ENCODE measurements at regions of chr7 and their contacts with region 1.

Region 1: GRCh38 chr7:102272075-102272917 is 14.4 kb upstream of the SH2B2 start:
- DNase-seq: peak; percentile 85
- H3K4me3 ChIP-seq: no peak overlapping the region
- H3K27ac ChIP-seq: no peak overlapping the region
- H3K4me1 ChIP-seq: peaks cover 0 to 8% (median 7%) of the 10 kb centered on the region in 4 donors
- H3K27me3 ChIP-seq: no peaks in the 10 kb centered on the region
- CTCF ChIP-seq: peak; percentile 80 to 94 (median 88)
- EP300 ChIP-seq: no peak
- POLR2A ChIP-seq: no peak

Region 2: DNA sequence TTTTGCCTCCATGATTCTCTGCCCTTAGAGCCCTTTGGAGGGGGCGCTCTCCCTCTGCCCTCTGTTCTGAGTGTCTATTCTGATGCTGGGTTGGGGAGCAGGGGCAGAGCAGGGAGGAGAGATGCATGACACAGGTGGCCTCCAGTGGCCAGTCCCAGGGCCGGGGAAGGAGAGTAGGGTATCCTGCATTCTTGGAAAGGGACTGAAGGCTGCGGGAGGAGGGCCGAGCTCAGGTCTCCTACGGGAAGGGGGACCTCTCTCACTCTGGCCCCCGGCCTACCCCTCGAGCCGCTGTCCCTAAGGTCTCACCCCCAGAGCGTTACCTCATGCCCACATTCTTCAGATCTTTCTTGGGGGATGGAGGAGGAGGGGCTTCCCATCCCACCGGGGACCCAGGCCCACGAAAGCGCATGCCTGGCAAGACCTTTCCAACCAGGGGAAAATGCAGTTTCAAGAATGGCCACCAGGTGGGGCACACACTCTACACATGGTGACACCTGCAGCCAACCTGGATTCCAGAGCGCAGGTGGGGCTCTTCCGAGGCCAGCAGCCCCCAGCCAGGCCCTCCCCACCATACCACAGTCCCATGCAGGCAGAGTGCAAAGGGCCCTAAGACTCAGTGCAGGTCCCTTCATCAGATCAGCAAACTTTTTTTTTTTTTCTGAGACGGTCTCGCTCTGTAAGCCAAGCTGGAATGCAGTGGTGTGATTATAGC is 729.6 kb before region 1 on chr7:
- intact Hi-C with region 1: loop called (anchors 1 kb)
- DNase-seq: no peak
- H3K4me3 ChIP-seq: no peak overlapping the region
- H3K27ac ChIP-seq: no peak overlapping the region
- H3K4me1 ChIP-seq: no peaks in the 10 kb centered on the region
- H3K27me3 ChIP-seq: peaks cover 0 to 8% (median 0%) of the 10 kb centered on the region in 3 donors
- CTCF ChIP-seq: peak; percentile 50 to 92 (median 84)
- EP300 ChIP-seq: no peak
- POLR2A ChIP-seq: no peak

Region 3: GRCh38 chr7:101602484-101603241 is 669.6 kb before region 1 on chr7:
- intact Hi-C with region 1: loop called (anchors 1 kb)
- DNase-seq: peak; percentile 79
- H3K4me3 ChIP-seq: no peak overlapping the region
- H3K27ac ChIP-seq: no peak overlapping the region
- H3K4me1 ChIP-seq: peaks cover 0 to 6% (median 3%) of the 10 kb centered on the region in 4 donors
- H3K27me3 ChIP-seq: no peaks in the 10 kb centered on the region
- CTCF ChIP-seq: peak; percentile 40 to 78 (median 66)
- EP300 ChIP-seq: no peak
- POLR2A ChIP-seq: no peak

Region 4: GRCh38 chr7:102248456-102249395 is 23.6 kb before region 1 on chr7:
- intact Hi-C with region 1: no loop called
- DNase-seq: no peak
- H3K4me3 ChIP-seq: no peak overlapping the region
- H3K27ac ChIP-seq: no peak overlapping the region
- H3K4me1 ChIP-seq: no peaks in the 10 kb centered on the region
- H3K27me3 ChIP-seq: no peaks in the 10 kb centered on the region
- CTCF ChIP-seq: no peak
- EP300 ChIP-seq: no peak
- POLR2A ChIP-seq: no peak

Region 5: DNA sequence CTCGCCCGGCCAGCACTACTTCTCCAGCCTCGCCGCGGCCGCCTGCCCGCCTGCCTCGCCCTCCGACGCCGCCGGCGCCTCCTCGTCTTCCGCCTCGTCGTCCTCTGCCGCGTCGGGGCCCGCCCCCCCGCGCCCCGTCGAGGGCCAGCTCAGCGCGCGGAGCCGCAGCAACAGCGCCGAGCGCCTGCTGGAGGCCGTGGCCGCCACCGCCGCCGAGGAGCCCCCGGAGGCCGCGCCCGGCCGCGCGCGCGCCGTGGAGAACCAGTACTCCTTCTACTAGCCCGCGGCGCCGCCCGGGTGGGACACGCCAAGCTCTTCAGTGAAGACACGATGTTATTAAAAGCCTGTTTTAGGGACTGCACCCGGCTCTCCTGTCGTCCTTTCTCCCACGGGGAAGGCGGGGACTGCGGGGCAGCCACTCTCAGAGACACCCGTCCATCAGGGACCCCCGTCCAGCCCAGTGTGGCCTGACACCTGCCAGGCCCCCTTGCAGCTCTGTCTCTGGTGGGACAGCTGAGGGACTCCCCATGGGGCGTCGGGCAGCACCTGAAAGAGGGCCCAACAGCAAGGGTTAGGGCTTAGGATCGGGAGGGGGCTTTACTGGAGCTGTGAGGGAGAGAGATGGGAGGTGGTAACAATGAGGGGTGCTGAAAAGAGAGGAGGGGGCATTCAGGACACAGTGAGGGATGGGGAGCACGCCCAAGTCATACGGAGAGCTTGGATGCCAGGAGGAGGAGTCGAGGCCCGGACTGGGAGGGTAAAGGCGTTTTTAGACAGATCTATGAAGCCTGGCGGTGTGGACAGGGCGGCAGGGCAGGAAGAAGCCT is 49.3 kb after region 1 on chr7:
- intact Hi-C with region 1: no loop called
- DNase-seq: no peak
- H3K4me3 ChIP-seq: no peak overlapping the region
- H3K27ac ChIP-seq: no peak overlapping the region
- H3K4me1 ChIP-seq: no peaks in the 10 kb centered on the region
- H3K27me3 ChIP-seq: peaks cover 4 to 30% (median 5%) of the 10 kb centered on the region in 3 donors
- CTCF ChIP-seq: no peak
- EP300 ChIP-seq: no peak
- POLR2A ChIP-seq: no peak

Region 6: DNA sequence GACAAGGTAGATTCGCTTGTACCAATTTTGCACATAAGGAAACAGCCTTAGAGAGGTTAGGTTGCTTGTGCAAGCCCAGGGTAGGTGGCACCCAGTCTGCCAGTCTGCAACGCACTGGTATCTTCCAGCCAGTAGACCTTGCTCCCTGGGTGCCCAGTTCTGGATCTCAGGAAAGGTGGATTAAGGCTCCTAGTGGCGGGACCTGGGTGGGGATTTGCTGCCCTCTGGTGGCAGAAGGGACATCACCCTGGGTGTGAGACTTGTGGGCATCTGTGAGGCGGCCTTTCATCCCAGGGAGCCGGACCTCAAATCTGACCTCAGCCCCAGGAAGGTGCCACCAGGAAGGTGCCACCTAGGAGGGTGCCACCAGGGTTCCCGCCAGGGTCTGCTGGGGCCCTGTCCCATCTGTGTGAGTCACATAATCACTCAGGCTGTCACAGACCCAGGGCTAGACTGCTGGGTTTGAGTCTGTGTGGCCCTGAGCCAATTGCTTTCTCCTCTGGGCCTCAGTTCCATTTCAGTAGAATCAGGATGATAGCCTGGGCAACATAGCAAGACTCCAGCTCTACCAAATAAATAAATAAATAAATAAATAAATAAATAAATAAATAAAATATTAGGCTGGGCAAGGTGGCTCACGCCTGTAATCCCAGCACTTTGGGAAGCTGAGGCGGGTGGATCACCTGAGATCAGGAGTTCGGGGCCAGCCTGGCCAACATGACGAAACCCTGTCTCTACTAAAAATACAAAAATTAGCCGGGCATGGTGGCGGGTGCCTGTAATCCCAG is 118.6 kb after region 1 on chr7:
- intact Hi-C with region 1: no loop called
- DNase-seq: peak; percentile 88
- H3K4me3 ChIP-seq: no peak overlapping the region
- H3K27ac ChIP-seq: no peak overlapping the region
- H3K4me1 ChIP-seq: peaks cover 0 to 5% (median 0%) of the 10 kb centered on the region in 4 donors
- H3K27me3 ChIP-seq: no peaks in the 10 kb centered on the region
- CTCF ChIP-seq: peak; percentile 81 to 93 (median 91)
- EP300 ChIP-seq: no peak
- POLR2A ChIP-seq: no peak

Measured in sigmoid colon (tissue), 7 donors.